Thyroid gland (tissue), 4 donors: ENCODE measurements at regions of chr11 and their contacts with region 1.

Region 1: DNA sequence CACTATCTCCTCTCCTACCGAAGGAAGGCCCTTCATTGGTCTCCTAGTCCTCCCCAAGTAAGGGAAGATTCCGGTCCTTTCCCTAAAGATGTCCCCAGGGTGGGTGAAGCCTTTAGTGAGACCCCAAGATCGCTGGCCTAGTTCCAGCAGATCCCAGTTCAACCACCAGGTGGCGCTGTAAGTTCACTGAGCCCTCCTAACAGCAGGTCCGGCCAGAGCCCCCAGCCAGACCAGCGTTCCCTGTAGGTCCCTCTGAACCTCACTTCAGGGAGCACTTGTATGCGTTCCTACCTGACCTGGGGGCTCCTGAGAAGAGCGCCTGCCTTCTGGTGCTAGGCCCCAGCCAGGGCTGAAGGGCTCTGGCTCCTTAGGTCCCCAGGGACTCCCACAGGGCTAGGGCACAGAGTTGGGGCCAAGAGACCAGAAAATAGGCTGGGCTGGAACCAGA is 38.1 kb downstream of the LMO1 start:
- DNase-seq: peak; percentile 73 to 78
- H3K4me3 ChIP-seq: no peak overlapping the region
- H3K27ac ChIP-seq: no peak overlapping the region
- H3K4me1 ChIP-seq: peaks cover 14 to 15% of the 10 kb centered on the region in 2 donors
- H3K27me3 ChIP-seq: no peaks in the 10 kb centered on the region
- CTCF ChIP-seq: peak; percentile 84 to 97 (median 94)
- POLR2A ChIP-seq: no peak

Region 2: GRCh38 chr11:7927635-7928034 is 298.0 kb before region 1 on chr11:
- intact Hi-C with region 1: no loop called
- DNase-seq: no peak
- H3K4me3 ChIP-seq: no peak overlapping the region
- H3K27ac ChIP-seq: no peak overlapping the region
- H3K4me1 ChIP-seq: no peaks in the 10 kb centered on the region
- H3K27me3 ChIP-seq: no peaks in the 10 kb centered on the region
- CTCF ChIP-seq: no peak
- POLR2A ChIP-seq: no peak

Region 3: DNA sequence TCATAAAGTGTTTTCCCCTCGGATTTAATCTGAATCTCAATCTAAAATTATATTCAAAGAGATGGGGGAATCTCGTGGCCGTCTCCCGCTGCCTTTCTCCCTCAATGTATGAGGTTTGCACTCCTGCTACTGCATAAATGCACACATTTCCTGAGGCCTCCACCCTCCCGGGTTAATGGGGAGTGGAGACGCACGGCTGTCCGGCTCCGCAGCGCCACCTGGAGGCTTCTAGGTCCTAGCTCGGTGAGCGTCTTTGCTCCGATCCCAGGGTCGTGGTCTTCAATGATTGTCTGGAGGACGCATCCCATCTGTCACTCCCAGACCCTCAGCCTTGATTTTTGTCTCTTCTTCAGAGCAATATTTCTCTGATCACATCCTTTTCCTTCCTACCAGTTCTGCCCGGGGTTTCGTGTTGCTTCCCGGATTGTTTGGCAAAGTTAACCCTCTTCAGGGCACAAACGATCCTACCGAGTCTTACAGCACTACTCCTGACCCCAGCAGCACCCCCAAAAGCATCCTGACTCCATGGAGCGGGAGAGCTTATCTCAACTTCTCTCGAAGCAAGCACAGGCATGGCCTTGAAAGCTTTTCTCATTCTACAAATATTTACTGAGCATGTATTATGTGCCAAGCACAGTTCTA is 38.3 kb after region 1 on chr11 and contains the start of gene LMO1:
- intact Hi-C with region 1: loop called (anchors 5 kb)
- DNase-seq: peak; percentile 76 to 81
- H3K4me3 ChIP-seq: peak within 1 kb of the TSS in 2 of 3 donors; percentile 38 to 42
- H3K27ac ChIP-seq: no peak within 1 kb of the TSS
- H3K4me1 ChIP-seq: peaks cover 4 to 31% of the 10 kb centered on the region in 2 donors
- H3K27me3 ChIP-seq: peaks cover 5% of the 10 kb centered on the region
- CTCF ChIP-seq: peak; percentile 61 to 83 (median 77)
- POLR2A ChIP-seq: no peak
- total RNA-seq, gene LMO1: 0.59 TPM in 1 of 4 donors, not detected in the others

Region 4: GRCh38 chr11:8477680-8478079 is 252.1 kb after region 1 on chr11:
- intact Hi-C with region 1: no loop called
- DNase-seq: no peak
- H3K4me3 ChIP-seq: no peak overlapping the region
- H3K27ac ChIP-seq: no peak overlapping the region
- H3K4me1 ChIP-seq: peaks cover 7 to 8% of the 10 kb centered on the region in 2 donors
- H3K27me3 ChIP-seq: no peaks in the 10 kb centered on the region
- CTCF ChIP-seq: no peak
- POLR2A ChIP-seq: no peak

Region 5: DNA sequence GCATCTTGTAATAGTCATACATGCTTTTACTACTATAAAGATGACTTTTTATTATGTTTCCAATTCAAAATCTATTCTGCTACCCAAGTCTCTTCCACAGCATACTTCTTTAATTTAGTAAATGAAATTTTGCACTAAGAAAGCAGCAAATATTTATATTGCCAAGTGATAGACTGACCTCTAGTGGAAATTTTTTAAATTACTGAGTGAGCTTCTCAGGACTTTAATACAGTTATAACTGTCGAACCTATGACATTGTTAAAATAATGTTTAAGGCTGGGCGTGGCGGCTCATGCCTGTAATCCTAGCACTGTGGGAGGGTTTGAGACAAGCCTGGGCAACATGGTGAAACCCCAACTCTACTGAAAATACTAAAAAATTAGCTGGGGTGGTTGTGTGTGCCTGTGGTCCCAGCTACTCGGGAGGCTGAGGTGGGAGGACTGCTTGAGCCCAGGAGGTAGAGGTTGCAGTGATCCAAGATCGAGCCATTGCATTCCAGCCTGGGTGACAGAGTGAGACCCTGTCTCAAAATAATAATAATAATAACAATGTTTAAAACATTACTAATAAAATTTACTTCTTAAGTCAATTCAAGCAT is 341.1 kb after region 1 on chr11:
- intact Hi-C with region 1: loop called (anchors 5 kb)
- DNase-seq: no peak
- H3K4me3 ChIP-seq: no peak overlapping the region
- H3K27ac ChIP-seq: no peak overlapping the region
- H3K4me1 ChIP-seq: no peaks in the 10 kb centered on the region
- H3K27me3 ChIP-seq: no peaks in the 10 kb centered on the region
- CTCF ChIP-seq: peak; percentile 45 to 83 (median 64)
- POLR2A ChIP-seq: no peak